ENCODE measurements at regions of chr10 and their contacts with region 1.

Region 1: GRCh38 chr10:72319416-72320254 is 35.1 kb downstream of the DNAJB12 start:
- DNase-seq: peak in 3 of 4 experiments; percentile 49 to 61 (median 58)
- ATAC-seq: no peak
- H3K4me3 ChIP-seq: no peak overlapping the region
- H3K27ac ChIP-seq: peak overlapping the region; percentile 97
- H3K4me1 ChIP-seq: peaks cover 66 to 69% of the 10 kb centered on the region in 2 experiments
- H3K27me3 ChIP-seq: no peaks in the 10 kb centered on the region
- CTCF ChIP-seq: no peak
- EP300 ChIP-seq: no peak; the same call in 1 of the 2 replicates
- POLR2A ChIP-seq: no peak
- RAD21 ChIP-seq: no peak

Region 2: GRCh38 chr10:71727738-71728737 is 591.6 kb before region 1 on chr10:
- CTCF ChIA-PET with region 1: no interaction called
- POLR2A ChIA-PET with region 1: no interaction called
- in situ Hi-C with region 1: no loop called
- intact Hi-C with region 1: no loop called
- DNase-seq: peak in 2 of 4 experiments; percentile 42 to 63
- ATAC-seq: peak; percentile 48
- H3K4me3 ChIP-seq: no peak overlapping the region
- H3K27ac ChIP-seq: peak overlapping the region; percentile 37; the same call in 1 of the 3 replicates
- H3K4me1 ChIP-seq: peaks cover 31 to 64% of the 10 kb centered on the region in 2 experiments
- H3K27me3 ChIP-seq: no peaks in the 10 kb centered on the region; a peak in 1 of 5 replicates
- CTCF ChIP-seq: no peak
- EP300 ChIP-seq: no peak
- POLR2A ChIP-seq: no peak
- RAD21 ChIP-seq: no peak

Region 3: GRCh38 chr10:72215652-72216549 is 103.7 kb before region 1 on chr10 and contains the starts of genes ANAPC16 and ASCC1:
- CTCF ChIA-PET with region 1: no interaction called
- POLR2A ChIA-PET with region 1: interaction called, 19 read pairs
- in situ Hi-C with region 1: no loop called
- intact Hi-C with region 1: no loop called
- DNase-seq: peak; percentile 93 to 98 (median 97)
- ATAC-seq: peak; percentile 90
- H3K4me3 ChIP-seq: peak within 1 kb of the TSS; percentile 65
- H3K27ac ChIP-seq: peak within 1 kb of the TSS; percentile 99
- H3K4me1 ChIP-seq: peaks cover 13 to 19% of the 10 kb centered on the region in 2 experiments; a peak in 4 of 5 replicates
- H3K27me3 ChIP-seq: no peaks in the 10 kb centered on the region
- CTCF ChIP-seq: 0 out of 6 replicates have a peak, but pooled peaks of 1 of the 3 experiments have one; percentile 1
- EP300 ChIP-seq: peak; percentile 22; the same call in 1 of the 2 replicates
- POLR2A ChIP-seq: peak; percentile 100
- RAD21 ChIP-seq: peak; percentile 10 to 34; a peak in 1 of 4 replicates
- polyA plus RNA-seq, gene ANAPC16: 184 to 208 TPM
- polyA plus RNA-seq, gene ASCC1: 50.8 to 73.3 TPM

Region 4: DNA sequence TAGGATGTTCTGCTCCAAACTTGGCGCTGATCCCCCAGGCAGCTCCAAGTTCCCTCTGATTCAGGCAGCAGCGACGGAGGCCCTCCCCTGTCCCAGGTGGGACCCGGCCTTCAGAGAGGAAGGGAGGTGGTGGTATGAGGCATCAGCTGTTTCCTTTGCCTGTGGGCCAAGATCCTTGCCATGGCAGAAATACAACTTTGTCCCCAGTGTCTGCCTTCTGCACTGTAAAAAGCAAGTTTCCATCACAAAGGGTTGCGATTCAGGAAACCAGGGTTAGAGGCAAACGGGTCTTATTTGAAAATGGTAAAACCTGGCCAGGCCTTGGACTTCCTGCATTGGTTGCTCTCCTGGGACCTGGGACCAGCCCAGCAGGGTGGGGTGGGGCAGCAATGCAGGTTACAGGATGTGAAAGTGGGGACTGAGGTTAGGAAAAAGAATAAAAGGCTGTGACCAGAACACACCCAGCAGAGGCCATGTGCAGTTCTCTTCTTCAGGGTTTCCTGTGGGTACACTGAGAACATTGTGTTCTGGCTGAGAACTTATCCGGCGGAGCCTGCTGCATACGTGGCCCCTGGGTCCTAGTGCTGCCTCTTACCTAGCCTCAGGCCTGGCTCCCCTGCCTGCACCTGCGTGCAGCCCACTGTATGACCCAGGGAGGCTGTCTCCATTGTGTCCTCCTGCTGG is 71.0 kb before region 1 on chr10:
- CTCF ChIA-PET with region 1: no interaction called
- POLR2A ChIA-PET with region 1: interaction called, 19 read pairs
- in situ Hi-C with region 1: no loop called
- intact Hi-C with region 1: loop called (anchors 2 kb)
- DNase-seq: no peak
- ATAC-seq: peak; percentile 51
- H3K4me3 ChIP-seq: no peak overlapping the region
- H3K27ac ChIP-seq: no peak overlapping the region
- H3K4me1 ChIP-seq: peaks cover 34 to 50% of the 10 kb centered on the region in 2 experiments
- H3K27me3 ChIP-seq: no peaks in the 10 kb centered on the region
- CTCF ChIP-seq: no peak
- EP300 ChIP-seq: no peak
- POLR2A ChIP-seq: no peak
- RAD21 ChIP-seq: no peak

Region 5: DNA sequence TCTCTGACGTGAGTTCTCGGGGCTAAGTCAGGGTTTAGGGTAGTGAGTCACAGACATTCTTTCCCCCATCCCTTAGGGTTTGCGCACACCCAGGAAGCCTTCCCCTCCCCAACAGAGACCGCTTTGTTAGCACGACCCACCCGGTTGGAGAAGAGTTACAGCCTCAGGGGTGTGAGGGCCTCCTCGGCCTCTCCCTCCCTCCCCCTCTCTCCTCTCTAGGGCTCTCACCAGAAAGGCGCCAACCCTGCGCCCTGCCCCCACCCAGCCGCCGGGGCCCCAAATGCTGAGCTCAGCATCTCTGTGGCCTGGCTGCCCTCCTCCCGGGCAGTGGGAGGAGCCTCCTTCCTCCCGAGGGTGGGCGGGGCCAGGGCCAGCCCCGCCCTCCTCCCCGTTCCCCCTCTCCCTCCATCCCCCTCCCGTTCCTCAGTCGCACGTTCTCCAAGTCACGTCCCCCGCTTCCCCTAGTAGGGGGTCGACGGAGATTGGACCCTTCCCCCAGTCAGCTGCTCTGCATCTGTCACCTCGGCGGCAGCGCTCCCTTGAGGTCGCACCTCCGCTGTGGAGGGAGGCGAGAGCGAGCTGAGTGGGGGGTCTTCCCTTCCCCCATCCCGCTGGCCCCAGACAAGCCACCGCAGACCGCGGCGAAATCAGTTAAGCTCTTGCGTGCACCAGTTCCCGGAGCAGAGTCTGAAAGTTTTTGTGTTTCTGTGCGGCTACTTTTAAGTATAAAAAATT is 58.9 kb before region 1 on chr10:
- CTCF ChIA-PET with region 1: no interaction called
- POLR2A ChIA-PET with region 1: interaction called, 16 read pairs
- in situ Hi-C with region 1: no loop called
- intact Hi-C with region 1: no loop called
- DNase-seq: peak; percentile 95 to 100 (median 100)
- ATAC-seq: peak; percentile 91
- H3K4me3 ChIP-seq: peak overlapping the region; percentile 54
- H3K27ac ChIP-seq: peak overlapping the region; percentile 94
- H3K4me1 ChIP-seq: peaks cover 43 to 54% of the 10 kb centered on the region in 2 experiments
- H3K27me3 ChIP-seq: no peaks in the 10 kb centered on the region
- CTCF ChIP-seq: peak in 2 of 3 experiments; percentile 30 to 33; a peak in 1 of 6 replicates
- EP300 ChIP-seq: peak; percentile 53; the same call in 1 of the 2 replicates
- POLR2A ChIP-seq: peak; percentile 73
- RAD21 ChIP-seq: no peak; a peak in 1 of 4 replicates

Region 6: GRCh38 chr10:72292223-72292691 is 27.4 kb before region 1 on chr10:
- CTCF ChIA-PET with region 1: no interaction called
- POLR2A ChIA-PET with region 1: interaction called, 29 read pairs
- in situ Hi-C with region 1: no loop called
- intact Hi-C with region 1: loop called (anchors 1 kb)
- DNase-seq: no peak
- ATAC-seq: no peak
- H3K4me3 ChIP-seq: no peak overlapping the region
- H3K27ac ChIP-seq: no peak overlapping the region
- H3K4me1 ChIP-seq: peaks cover 41 to 49% of the 10 kb centered on the region in 2 experiments
- H3K27me3 ChIP-seq: no peaks in the 10 kb centered on the region
- CTCF ChIP-seq: no peak
- EP300 ChIP-seq: no peak
- POLR2A ChIP-seq: no peak
- RAD21 ChIP-seq: no peak

Region 7: GRCh38 chr10:72308320-72308987 is 11.2 kb before region 1 on chr10:
- CTCF ChIA-PET with region 1: no interaction called
- POLR2A ChIA-PET with region 1: interaction called, 199 read pairs
- in situ Hi-C with region 1: no loop called
- intact Hi-C with region 1: loop called (anchors 1 kb)
- DNase-seq: peak; percentile 72 to 96 (median 79)
- ATAC-seq: peak; percentile 82
- H3K4me3 ChIP-seq: no peak overlapping the region
- H3K27ac ChIP-seq: peak overlapping the region; percentile 87
- H3K4me1 ChIP-seq: peaks cover 45 to 57% of the 10 kb centered on the region in 2 experiments
- H3K27me3 ChIP-seq: no peaks in the 10 kb centered on the region
- CTCF ChIP-seq: peak in 2 of 3 experiments; percentile 9 to 14; a peak in 2 of 6 replicates
- EP300 ChIP-seq: peak; percentile 78
- POLR2A ChIP-seq: peak; percentile 74
- RAD21 ChIP-seq: peak; percentile 33 to 50

Region 8: DNA sequence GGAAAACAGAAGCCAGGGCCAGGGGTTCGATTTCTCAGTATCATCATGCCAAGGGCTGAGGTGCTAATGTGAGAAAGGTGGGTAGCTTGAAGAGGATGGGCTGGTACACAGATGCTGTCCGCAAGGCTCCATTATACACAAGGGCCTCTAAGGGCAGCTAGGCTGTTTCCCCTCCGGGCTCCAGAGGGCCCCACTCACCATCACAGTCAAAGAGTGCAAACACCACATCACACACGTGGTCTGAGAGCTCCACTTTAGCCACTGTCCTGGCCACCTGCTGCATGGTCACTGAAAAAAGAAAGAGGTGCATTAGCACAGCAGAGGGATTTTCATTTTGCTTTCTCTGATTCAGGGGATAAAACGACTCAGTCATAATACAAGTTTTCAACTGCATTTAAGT is 56.0 kb after region 1 on chr10:
- CTCF ChIA-PET with region 1: no interaction called
- POLR2A ChIA-PET with region 1: no interaction called
- in situ Hi-C with region 1: no loop called
- intact Hi-C with region 1: no loop called
- DNase-seq: peak in 3 of 4 experiments; percentile 45 to 64 (median 51)
- ATAC-seq: peak; percentile 98
- H3K4me3 ChIP-seq: no peak overlapping the region
- H3K27ac ChIP-seq: no peak overlapping the region
- H3K4me1 ChIP-seq: no peaks in the 10 kb centered on the region
- H3K27me3 ChIP-seq: no peaks in the 10 kb centered on the region
- CTCF ChIP-seq: peak; percentile 64 to 71 (median 71)
- EP300 ChIP-seq: no peak
- POLR2A ChIP-seq: no peak
- RAD21 ChIP-seq: peak; percentile 32 to 76

Region 9: GRCh38 chr10:72702868-72703581 is 383.4 kb after region 1 on chr10:
- CTCF ChIA-PET with region 1: no interaction called
- POLR2A ChIA-PET with region 1: no interaction called
- in situ Hi-C with region 1: no loop called
- intact Hi-C with region 1: no loop called
- DNase-seq: no peak
- ATAC-seq: peak; percentile 58
- H3K4me3 ChIP-seq: no peak overlapping the region
- H3K27ac ChIP-seq: no peak overlapping the region
- H3K4me1 ChIP-seq: no peaks in the 10 kb centered on the region
- H3K27me3 ChIP-seq: no peaks in the 10 kb centered on the region
- CTCF ChIP-seq: no peak
- EP300 ChIP-seq: no peak
- POLR2A ChIP-seq: no peak
- RAD21 ChIP-seq: no peak